ENCODE measurements at regions of chr1 and their contacts with region 1.

Region 1: GRCh38 chr1:222792744-222793143 is 22.1 kb upstream of the DISP1 start:
- DNase-seq: no peak
- H3K4me3 ChIP-seq: no peak overlapping the region
- H3K27ac ChIP-seq: no peak overlapping the region
- H3K4me1 ChIP-seq: no peaks in the 10 kb centered on the region; a peak in 1 of 7 replicates
- H3K27me3 ChIP-seq: no peaks in the 10 kb centered on the region; a peak in 1 of 7 replicates
- CTCF ChIP-seq: peak in 2 of 3 experiments; percentile 55 to 59; a peak in 2 of 4 replicates
- EP300 ChIP-seq: no peak
- POLR2A ChIP-seq: no peak
- RAD21 ChIP-seq: peak; percentile 91

Region 2: DNA sequence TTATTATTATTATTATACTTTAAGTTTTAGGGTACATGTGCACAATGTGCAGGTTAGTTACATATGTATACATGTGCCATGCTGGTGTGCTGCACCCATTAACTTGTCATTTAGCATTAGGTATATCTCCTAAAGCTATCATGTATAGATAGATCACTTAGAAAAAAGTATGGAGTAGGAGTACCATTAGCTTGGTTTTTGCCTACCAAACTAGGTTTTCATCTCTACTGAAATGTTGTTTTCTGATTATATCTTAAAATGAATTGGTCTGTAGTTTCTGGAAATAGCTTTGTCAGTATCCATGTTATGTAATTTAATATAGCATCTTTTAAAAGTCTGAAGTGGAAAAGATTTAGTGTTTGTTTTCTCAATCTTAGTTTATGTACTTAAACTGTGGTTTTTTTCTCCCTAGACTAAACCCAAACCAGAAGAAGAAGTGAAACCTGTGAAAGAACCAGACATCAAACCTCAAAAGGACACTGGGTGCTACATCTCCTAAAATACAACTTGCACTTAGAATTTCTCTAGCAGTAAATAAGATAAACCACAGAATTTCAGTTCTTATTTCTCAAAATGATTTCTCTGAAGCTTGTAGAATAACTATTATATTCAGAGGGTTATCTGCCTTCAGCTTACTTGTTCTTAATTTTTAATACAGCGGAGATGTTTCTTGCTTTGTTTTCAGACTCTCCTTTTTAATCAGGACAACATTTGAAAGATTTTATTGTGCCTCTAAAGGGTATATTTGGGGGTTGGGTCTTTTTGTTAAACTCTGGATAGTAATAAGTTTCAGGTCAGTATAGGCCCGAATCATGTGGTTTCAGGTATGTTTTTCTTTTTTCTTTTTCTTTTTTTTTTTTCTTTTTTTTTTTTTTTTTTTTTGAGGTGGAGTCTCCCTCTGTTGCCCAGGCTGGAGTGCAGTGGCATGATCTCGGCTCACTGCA is 60.3 kb before region 1 on chr1:
- CTCF ChIA-PET with region 1: no interaction called
- POLR2A ChIA-PET with region 1: no interaction called
- DNase-seq: no peak
- H3K4me3 ChIP-seq: no peak overlapping the region
- H3K27ac ChIP-seq: no peak overlapping the region
- H3K4me1 ChIP-seq: peaks cover 6 to 13% (median 11%) of the 10 kb centered on the region in 4 experiments; a peak in 6 of 7 replicates
- H3K27me3 ChIP-seq: no peaks in the 10 kb centered on the region
- CTCF ChIP-seq: no peak
- EP300 ChIP-seq: no peak
- POLR2A ChIP-seq: no peak
- RAD21 ChIP-seq: no peak

Region 3: DNA sequence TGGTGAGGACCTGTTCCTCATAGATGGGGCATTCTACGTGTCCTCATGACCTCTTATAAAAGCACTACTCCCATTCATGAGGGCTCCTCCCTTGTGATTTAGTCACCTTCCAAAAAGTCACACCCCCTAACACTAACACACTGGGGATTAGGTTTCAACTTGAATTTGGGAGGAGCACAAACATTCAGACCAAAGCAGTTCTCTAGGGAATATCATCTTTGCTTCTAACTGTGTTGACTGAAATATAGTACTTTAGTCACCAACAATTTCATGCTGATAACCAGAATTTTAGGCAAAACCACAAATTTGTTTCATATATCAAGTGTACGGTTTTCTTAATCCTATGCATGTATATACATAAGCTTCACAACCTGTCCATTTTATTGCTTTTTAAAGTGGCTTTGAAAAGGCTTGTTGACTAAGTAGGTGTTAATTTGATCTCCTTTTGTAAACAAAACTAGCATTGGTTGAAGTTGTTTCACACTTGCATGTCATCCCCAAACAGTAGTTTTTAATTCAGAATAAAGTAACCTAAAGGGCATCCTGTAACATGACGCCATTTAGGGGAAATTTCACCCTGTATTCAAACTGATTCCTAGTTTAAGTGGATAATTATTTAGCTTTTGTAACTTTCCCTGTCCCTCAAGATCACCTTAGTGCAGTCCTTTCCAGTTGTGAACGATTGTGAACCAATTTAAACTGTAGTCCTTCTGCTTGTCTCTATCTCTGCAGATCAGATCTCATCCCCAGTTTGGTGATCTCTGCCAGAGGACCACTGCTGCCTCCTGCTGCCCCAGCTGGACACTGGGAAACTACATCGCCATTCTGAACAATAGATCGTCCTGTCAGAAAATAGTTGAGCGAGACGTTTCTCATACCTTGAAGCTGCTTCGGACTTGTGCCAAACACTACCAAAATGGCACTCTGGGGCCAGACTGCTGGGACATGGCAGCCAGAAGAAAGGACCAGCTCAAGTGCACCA is 209.2 kb after region 1 on chr1:
- CTCF ChIA-PET with region 1: interaction called, 20 read pairs
- POLR2A ChIA-PET with region 1: no interaction called
- DNase-seq: no peak
- H3K4me3 ChIP-seq: no peak overlapping the region
- H3K27ac ChIP-seq: no peak overlapping the region
- H3K4me1 ChIP-seq: peaks cover 0 to 2% (median under 1%) of the 10 kb centered on the region in 4 experiments; a peak in 3 of 7 replicates
- H3K27me3 ChIP-seq: no peaks in the 10 kb centered on the region; a peak in 1 of 7 replicates
- CTCF ChIP-seq: peak; percentile 49 to 65 (median 51)
- EP300 ChIP-seq: no peak
- POLR2A ChIP-seq: no peak
- RAD21 ChIP-seq: peak; percentile 74 to 80

Region 4: GRCh38 chr1:223081181-223081994 is 288.6 kb after region 1 on chr1:
- CTCF ChIA-PET with region 1: interaction called, 163 read pairs
- POLR2A ChIA-PET with region 1: no interaction called
- DNase-seq: peak; percentile 89 to 90
- H3K4me3 ChIP-seq: no peak overlapping the region
- H3K27ac ChIP-seq: no peak overlapping the region
- H3K4me1 ChIP-seq: peaks cover 0 to 2% (median under 1%) of the 10 kb centered on the region in 4 experiments; a peak in 1 of 7 replicates
- H3K27me3 ChIP-seq: peaks cover 0 to 5% (median 0%) of the 10 kb centered on the region in 4 experiments; a peak in 1 of 7 replicates
- CTCF ChIP-seq: peak; percentile 88 to 97 (median 89)
- EP300 ChIP-seq: no peak
- POLR2A ChIP-seq: no peak
- RAD21 ChIP-seq: peak; percentile 99